T-cell (primary cell): ENCODE measurements at regions of chr11 and their contacts with region 1.

Region 1: GRCh38 chr11:18540207-18541009 is 13.7 kb upstream of the TSG101 start:
- DNase-seq: peak in 1 of 35 experiments; percentile 65
- ATAC-seq: peak; percentile 58 to 68 (median 61)
- H3K4me3 ChIP-seq: no peak overlapping the region
- H3K4me3 Mint-ChIP-seq: no peak overlapping the region
- H3K27ac ChIP-seq: no peak overlapping the region
- H3K27ac Mint-ChIP-seq: peak overlapping the region in 1 of 2 donors; percentile 29
- H3K4me1 ChIP-seq: no peaks in the 10 kb centered on the region
- H3K4me1 Mint-ChIP-seq: peaks cover 0 to 1% (median 1%) of the 10 kb centered on the region in 3 donors
- H3K27me3 ChIP-seq: no peaks in the 10 kb centered on the region
- H3K27me3 Mint-ChIP-seq: no peaks in the 10 kb centered on the region

Region 2: GRCh38 chr11:18588297-18589252 is 48.2 kb after region 1 on chr11 and contains the start of gene UEVLD:
- CTCF ChIA-PET with region 1: interaction called in 1 of 2 experiments, 10 read pairs
- POLR2A ChIA-PET with region 1: no interaction called
- DNase-seq: peak in 32 of 35 experiments; percentile 4 to 76 (median 22)
- ATAC-seq: peak; percentile 47 to 53 (median 50)
- H3K4me3 ChIP-seq: peak within 1 kb of the TSS; percentile 89 to 97
- H3K4me3 Mint-ChIP-seq: no peak within 1 kb of the TSS
- H3K27ac ChIP-seq: peak within 1 kb of the TSS; percentile 96
- H3K27ac Mint-ChIP-seq: no peak within 1 kb of the TSS
- H3K4me1 ChIP-seq: peaks cover 0 to 30% of the 10 kb centered on the region in 2 experiments
- H3K4me1 Mint-ChIP-seq: peaks cover 0 to 10% (median 3%) of the 10 kb centered on the region in 3 donors
- H3K27me3 ChIP-seq: no peaks in the 10 kb centered on the region
- H3K27me3 Mint-ChIP-seq: no peaks in the 10 kb centered on the region
- total RNA-seq, gene UEVLD: 3.9 to 9.0 (median 7.1) TPM

Region 3: DNA sequence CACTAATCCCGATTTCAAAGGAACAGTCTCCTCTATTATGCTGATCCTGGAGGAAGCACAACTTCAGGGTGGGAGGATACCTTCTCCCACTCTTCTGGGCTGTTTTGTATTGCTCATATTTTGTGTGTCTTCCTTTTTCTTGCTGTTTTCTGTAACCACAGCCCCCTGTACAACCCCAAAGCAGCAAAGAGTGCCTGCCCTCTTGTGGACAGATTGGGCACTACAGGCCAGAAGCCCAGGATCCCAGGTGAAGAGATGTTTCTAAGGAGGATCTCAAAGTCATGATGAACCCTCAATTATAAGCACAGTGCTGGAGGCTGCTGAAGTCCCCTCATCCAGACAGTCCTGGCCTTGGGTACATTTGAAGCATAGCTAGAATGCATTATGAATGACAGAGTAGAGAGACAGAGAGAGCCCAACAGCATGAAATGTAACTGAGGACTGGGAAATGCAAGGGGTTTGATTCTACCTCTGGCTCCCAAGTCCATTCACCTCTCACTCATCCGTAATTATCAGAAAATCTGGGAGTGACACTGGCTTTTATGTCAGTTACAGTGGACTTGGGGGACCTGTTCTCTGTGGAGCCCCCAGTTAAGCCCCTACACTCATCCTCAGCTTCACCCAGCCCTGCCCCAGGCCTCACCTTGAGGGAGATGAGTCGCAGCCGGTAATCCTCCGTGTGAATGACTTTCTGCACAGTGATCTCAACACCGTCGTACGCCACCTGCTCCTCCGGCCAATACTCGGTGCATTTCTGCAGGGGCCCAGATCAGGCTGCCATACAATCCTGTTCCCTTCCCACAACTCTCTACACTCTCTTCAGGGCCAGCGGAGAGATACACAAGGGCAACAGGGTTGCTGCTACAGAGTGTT is 191.8 kb after region 1 on chr11:
- CTCF ChIA-PET with region 1: interaction called, 15 to 22 read pairs
- POLR2A ChIA-PET with region 1: no interaction called
- DNase-seq: peak; percentile 24 to 81 (median 60)
- ATAC-seq: peak; percentile 65 to 75 (median 73)
- H3K4me3 ChIP-seq: no peak overlapping the region
- H3K4me3 Mint-ChIP-seq: no peak overlapping the region
- H3K27ac ChIP-seq: no peak overlapping the region
- H3K27ac Mint-ChIP-seq: no peak overlapping the region
- H3K4me1 ChIP-seq: peaks cover 0 to 14% of the 10 kb centered on the region in 2 experiments
- H3K4me1 Mint-ChIP-seq: peaks cover 7 to 16% (median 10%) of the 10 kb centered on the region in 3 donors
- H3K27me3 ChIP-seq: peaks cover 0 to 20% of the 10 kb centered on the region in 2 experiments
- H3K27me3 Mint-ChIP-seq: peaks cover 3 to 5% of the 10 kb centered on the region in 2 donors

Region 4: GRCh38 chr11:18768472-18768901 is 228.1 kb after region 1 on chr11:
- CTCF ChIA-PET with region 1: interaction called, 5 to 21 read pairs
- POLR2A ChIA-PET with region 1: no interaction called
- DNase-seq: no peak
- ATAC-seq: no peak
- H3K4me3 ChIP-seq: no peak overlapping the region
- H3K4me3 Mint-ChIP-seq: no peak overlapping the region
- H3K27ac ChIP-seq: no peak overlapping the region
- H3K27ac Mint-ChIP-seq: no peak overlapping the region
- H3K4me1 ChIP-seq: no peaks in the 10 kb centered on the region
- H3K4me1 Mint-ChIP-seq: peaks cover 0 to 7% (median 5%) of the 10 kb centered on the region in 3 donors
- H3K27me3 ChIP-seq: peaks cover 0 to 34% of the 10 kb centered on the region in 2 experiments
- H3K27me3 Mint-ChIP-seq: peaks cover 19 to 21% of the 10 kb centered on the region in 2 donors